ENCODE measurements at regions of chr15 and their contacts with region 1.

Region 1: GRCh38 chr15:34969340-34970097 is at the start of gene AQR:
- DNase-seq: peak; percentile 97
- H3K4me3 Mint-ChIP-seq: peak within 1 kb of the TSS; percentile 99
- H3K27ac Mint-ChIP-seq: peak within 1 kb of the TSS; percentile 93
- H3K4me1 Mint-ChIP-seq: peaks cover 40% of the 10 kb centered on the region
- H3K27me3 Mint-ChIP-seq: no peaks in the 10 kb centered on the region
- total RNA-seq, gene AQR: 30.8 to 31.3 TPM

Region 2: GRCh38 chr15:34900748-34901147 is 68.8 kb before region 1 on chr15:
- CTCF ChIA-PET with region 1: no interaction called
- intact Hi-C with region 1: loop called (anchors 10 kb)
- DNase-seq: no peak
- H3K4me3 Mint-ChIP-seq: no peak overlapping the region
- H3K27ac Mint-ChIP-seq: no peak overlapping the region
- H3K4me1 Mint-ChIP-seq: no peaks in the 10 kb centered on the region
- H3K27me3 Mint-ChIP-seq: no peaks in the 10 kb centered on the region

Measured in activated naive CD4-positive, alpha-beta T cell treated with anti-CD3 and anti-CD28 coated beads for 36 hours (primary cell).